Left cardiac atrium (tissue), 4 donors: ENCODE measurements at regions of chr3 and their contacts with region 1.

Region 1: GRCh38 chr3:137105277-137105977 is 147.6 kb downstream of the IL20RB start:
- DNase-seq: no peak
- ATAC-seq: peak; percentile 59 to 63

Region 2: GRCh38 chr3:137525471-137525870 is 420.0 kb after region 1 on chr3:
- intact Hi-C with region 1: no loop called
- DNase-seq: no peak
- ATAC-seq: no peak

Region 3: GRCh38 chr3:137946345-137946973 is 841.0 kb after region 1 on chr3:
- intact Hi-C with region 1: loop called in 1 of 2 experiments (anchors 5 kb)
- DNase-seq: peak; percentile 38
- ATAC-seq: peak in 1 of 2 donors; percentile 30

Region 4: DNA sequence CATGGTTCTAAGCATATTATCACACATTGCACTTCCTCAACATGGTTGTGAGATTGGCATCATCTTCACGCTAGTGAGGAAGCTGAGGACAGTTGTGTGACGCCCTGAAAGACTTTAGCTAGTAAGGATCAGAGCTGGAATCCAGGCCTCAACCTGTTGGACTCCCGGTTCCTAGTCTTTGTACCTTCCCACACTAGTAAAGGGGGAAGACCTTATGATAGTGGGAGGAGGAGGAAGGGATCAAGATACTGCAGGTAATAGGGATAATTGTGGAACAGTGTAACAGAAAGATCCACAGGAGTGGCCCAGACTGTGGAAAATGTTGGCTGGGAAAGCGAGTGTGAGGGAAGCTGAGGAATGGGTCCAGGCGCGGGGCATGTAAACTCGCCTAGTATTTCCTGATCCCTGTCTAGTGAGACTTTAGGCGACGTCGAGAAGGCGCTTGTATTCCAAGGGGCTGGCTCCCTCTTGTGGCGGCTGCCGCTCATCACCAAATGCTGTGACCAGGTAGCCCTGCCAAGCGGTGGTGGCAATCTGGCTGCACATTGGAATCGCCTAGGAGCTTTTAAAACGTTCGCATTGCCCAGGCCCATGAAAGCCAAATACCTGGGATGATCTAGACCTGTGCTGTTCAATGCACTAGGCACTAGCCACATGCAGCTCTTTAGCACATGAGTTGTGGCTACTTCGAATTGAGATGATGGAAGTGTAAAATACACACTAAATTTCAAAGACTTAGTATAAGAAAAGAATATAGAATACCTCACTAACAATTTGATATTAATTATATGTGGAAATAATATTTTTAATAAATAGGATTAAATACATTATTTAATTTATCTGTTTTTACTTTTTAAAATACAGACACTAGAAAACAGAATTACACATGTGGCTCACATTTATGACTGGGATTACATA is 865.7 kb after region 1 on chr3:
- intact Hi-C with region 1: loop called in 1 of 2 experiments (anchors 5 kb)
- DNase-seq: peak; percentile 76
- ATAC-seq: peak; percentile 89

Region 5: GRCh38 chr3:138051946-138052802 is 946.7 kb after region 1 on chr3:
- intact Hi-C with region 1: loop called in 1 of 2 experiments (anchors 5 kb)
- DNase-seq: peak; percentile 40
- ATAC-seq: peak; percentile 71 to 72

Region 6: DNA sequence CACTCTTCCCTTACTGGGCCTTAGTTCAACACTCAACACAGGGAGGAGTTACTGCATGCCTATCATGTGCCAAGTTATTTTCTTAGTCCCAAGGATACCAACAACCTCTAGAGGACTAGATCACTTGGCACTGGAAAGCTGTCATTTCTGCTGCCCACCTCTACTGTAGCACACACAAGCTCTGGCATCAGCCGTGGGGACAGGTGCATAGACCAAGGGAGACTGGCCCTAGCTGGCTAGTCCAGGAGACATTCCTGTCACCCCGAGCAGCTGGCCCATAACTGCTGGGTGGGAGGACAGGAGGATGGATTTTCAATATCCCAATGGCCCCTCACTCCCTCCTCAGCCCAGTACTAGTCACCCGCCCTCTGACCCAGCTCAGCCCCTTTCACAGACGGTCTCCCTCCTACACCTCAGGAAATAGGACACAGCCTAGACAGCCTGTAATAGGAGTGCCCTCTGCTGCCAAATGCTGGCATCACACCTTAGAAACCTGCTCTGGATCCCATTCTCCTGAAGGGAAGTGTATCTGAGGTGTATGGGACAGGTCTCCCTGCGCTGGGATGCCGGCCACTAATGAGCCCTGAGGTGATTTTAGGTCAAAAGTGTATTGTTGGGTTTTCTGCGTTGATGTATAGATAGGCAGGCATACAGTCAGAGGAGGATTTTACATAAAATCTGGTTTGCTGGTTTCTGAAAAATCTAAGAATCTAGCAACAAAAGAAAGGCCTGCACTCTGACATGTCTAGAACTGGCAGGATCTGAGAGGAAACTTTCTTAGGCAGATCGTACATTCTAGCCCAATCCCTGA is 1013.4 kb after region 1 on chr3:
- intact Hi-C with region 1: loop called in 1 of 2 experiments (anchors 10 kb)
- DNase-seq: peak; percentile 65
- ATAC-seq: peak; percentile 20 to 54